ENCODE measurements at regions of chr19 and their contacts with region 1.

Region 1: GRCh38 chr19:48492925-48493717 is 18.5 kb downstream of the LMTK3 start:
- DNase-seq: peak; percentile 96 to 97
- H3K4me3 ChIP-seq: peak overlapping the region; percentile 46 to 56
- H3K27ac ChIP-seq: peak overlapping the region; percentile 25 to 56
- H3K4me1 ChIP-seq: peaks cover 0 to 55% (median 25%) of the 10 kb centered on the region in 4 donors
- H3K27me3 ChIP-seq: peaks cover 0 to 43% of the 10 kb centered on the region in 2 donors
- CTCF ChIP-seq: no peak

Region 2: GRCh38 chr19:48582168-48582567 is 89.0 kb after region 1 on chr19:
- intact Hi-C with region 1: loop called (anchors 5 kb)
- DNase-seq: no peak
- H3K4me3 ChIP-seq: no peak overlapping the region
- H3K27ac ChIP-seq: no peak overlapping the region
- H3K4me1 ChIP-seq: peaks cover 0 to 4% (median 0%) of the 10 kb centered on the region in 4 donors
- H3K27me3 ChIP-seq: peaks cover 0 to 26% of the 10 kb centered on the region in 2 donors
- CTCF ChIP-seq: no peak

Measured in tibial artery (tissue), 4 donors.